ENCODE measurements at regions of chr17 and their contacts with region 1.

Region 1: DNA sequence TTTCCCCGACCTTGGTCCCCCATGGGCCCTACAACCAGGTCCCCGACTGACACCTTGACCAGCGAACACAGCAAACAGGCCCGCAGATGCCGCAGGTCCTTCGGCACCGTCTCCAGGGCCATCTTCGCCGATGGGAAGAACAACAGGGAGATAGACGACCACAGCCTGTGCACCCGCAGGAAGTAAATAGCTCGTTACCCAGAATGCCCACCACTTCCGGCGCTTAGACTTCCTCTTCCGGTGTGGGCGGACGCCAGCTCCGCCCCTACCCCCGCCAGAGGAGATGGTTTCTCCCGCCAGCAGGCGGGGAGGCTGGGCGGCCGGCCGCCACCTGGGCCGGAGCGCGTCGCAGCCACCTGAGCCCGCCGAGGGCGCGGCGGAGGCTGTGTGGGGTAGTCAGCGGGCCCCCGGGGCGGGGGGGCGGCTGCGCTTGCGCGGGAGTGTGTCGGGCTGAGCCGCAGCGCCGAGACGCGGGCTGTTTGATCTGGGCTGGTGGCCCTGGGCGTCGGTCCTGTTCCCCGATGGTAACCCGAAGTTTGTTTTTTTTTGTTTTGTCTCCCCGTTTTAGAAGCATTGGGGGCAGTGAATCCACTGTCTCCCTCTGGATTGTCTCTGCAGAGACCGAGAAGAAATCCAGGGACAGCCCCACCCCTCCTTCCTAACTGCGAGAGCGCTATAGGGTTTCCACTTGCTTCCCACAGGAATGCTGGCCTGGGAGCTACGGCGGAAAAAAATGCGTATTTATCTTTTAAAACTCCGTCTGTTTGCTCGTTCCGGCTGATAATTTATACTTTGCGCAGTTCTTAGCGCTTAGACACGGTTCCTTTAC is at the start of gene SUPT4H1:
- DNase-seq: peak; percentile 95
- total RNA-seq, gene SUPT4H1: 49.4 TPM

Region 2: GRCh38 chr17:58219001-58219788 is 133.0 kb before region 1 on chr17 and contains the start of gene MKS1:
- intact Hi-C with region 1: loop called (anchors 5 kb)
- DNase-seq: peak; percentile 96
- total RNA-seq, gene MKS1: 9.3 TPM

Region 3: GRCh38 chr17:58303971-58304725 is 48.1 kb before region 1 on chr17:
- intact Hi-C with region 1: no loop called
- DNase-seq: peak; percentile 84

Region 4: DNA sequence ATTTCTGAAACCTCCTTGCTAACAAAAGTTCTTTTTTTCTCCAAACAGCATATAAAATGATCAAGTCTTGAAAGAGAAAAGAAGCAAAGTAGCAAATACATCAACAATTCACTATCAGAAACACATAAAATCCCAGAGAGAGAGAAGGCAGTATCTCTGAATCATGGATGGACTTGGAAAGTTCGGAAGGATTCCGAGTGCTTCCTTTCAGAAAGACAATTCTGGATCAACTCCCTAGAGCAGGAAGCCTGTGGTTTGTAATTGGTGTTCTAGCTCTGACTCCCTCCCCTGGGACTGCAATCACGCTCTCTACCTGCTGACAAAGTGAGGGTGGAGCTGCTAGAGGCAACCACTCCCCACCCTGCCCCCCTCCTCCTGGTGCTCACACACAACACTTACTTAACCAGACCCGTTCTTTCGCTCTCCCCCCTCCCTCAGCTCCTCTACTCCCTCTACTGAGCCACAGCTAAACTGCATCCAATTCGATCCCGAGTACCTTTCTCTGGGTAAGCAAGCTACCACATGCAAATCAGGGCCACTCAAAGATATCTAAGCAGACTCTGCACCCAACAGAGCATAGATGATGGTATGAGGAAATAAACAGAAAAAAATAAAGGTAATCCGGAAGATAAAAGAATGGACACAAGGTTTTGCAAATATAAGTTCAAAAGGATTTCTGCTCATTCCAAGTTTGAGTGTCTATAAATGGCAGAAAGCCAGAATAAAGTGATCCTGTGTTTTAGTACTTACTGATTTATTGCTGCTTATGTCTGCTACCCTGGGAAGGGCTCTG is 65.3 kb after region 1 on chr17 and contains the start of gene RNF43:
- intact Hi-C with region 1: loop called (anchors 2 kb)
- DNase-seq: peak; percentile 91
- total RNA-seq, gene RNF43: 1.6 TPM

Region 5: DNA sequence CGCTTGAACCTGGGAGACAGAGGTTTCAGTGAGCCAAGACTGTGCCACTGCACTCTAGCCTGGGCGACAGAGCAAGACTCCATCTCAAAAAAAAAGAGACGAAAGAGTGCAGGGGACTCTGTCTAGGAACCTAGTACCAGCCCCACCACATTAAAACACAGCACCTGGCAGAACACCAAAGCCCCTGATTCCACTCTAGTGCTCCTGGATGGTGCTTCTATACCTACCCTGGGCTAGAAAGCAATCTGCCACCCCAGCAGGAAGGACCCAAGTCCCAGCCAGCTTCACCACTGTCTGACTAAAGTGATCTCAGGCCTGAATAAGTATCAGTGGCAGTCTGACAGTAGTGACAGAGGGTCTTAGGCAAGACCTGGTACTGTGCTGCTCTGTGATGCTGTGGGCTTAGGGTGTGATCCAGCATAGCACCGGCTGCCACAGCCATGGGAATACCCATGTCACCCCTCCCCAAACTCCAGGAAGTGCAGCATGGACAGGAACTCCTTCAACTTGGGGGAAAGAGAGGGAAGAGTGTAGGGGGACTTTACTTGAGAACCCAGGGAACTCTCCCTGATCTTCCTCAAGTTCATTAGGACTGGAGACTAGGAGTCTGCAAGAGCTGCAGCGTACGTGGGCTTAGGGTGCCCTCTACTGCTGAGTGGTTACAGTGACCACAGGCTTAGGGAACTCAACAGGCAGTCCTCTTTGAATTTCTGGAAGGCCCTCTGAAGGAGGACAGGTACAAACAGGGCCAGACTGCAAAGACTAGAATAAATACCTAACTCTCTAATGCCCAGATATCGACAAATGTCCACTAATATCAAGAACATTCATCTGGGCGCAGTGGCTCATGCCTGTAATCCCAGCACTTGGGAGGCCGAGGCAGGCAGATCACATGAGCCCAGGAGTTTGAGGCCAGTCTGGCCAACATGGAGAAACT is 95.1 kb after region 1 on chr17:
- intact Hi-C with region 1: no loop called
- DNase-seq: peak; percentile 78